Activated CD4-positive, alpha-beta memory T cell treated with anti-CD3 and anti-CD28 coated beads, Interleukin-2, amount 10 ng/mL, durations not matched to agents 7 days and 5 days (primary cell): ENCODE measurements at regions of chr14 and their contacts with region 1.

Region 1: GRCh38 chr14:49862089-49862673 is 9.6 kb upstream of the NEMF start:
- DNase-seq: peak; percentile 91
- H3K4me3 Mint-ChIP-seq: no peak overlapping the region
- H3K27ac Mint-ChIP-seq: no peak overlapping the region
- H3K4me1 Mint-ChIP-seq: peaks cover 29% of the 10 kb centered on the region
- H3K27me3 Mint-ChIP-seq: no peaks in the 10 kb centered on the region

Region 2: GRCh38 chr14:49598485-49599300 is 263.5 kb before region 1 on chr14 and contains the start of gene LRR1:
- CTCF ChIA-PET with region 1: interaction called, 7 read pairs
- POLR2A ChIA-PET with region 1: interaction called, 13 read pairs
- DNase-seq: peak; percentile 88
- H3K4me3 Mint-ChIP-seq: peak within 1 kb of the TSS; percentile 95
- H3K27ac Mint-ChIP-seq: peak within 1 kb of the TSS; percentile 95
- H3K4me1 Mint-ChIP-seq: peaks cover 47% of the 10 kb centered on the region
- H3K27me3 Mint-ChIP-seq: no peaks in the 10 kb centered on the region
- total RNA-seq, gene LRR1: 48.7 to 53.2 TPM

Region 3: GRCh38 chr14:49767562-49768300 is 94.5 kb before region 1 on chr14 and contains the start of gene KLHDC2:
- CTCF ChIA-PET with region 1: interaction called, 19 read pairs
- POLR2A ChIA-PET with region 1: interaction called, 30 read pairs
- DNase-seq: peak; percentile 92
- H3K4me3 Mint-ChIP-seq: peak within 1 kb of the TSS; percentile 98
- H3K27ac Mint-ChIP-seq: peak within 1 kb of the TSS; percentile 98
- H3K4me1 Mint-ChIP-seq: peaks cover 37% of the 10 kb centered on the region
- H3K27me3 Mint-ChIP-seq: no peaks in the 10 kb centered on the region
- total RNA-seq, gene KLHDC2: 34.3 to 34.7 TPM

Region 4: GRCh38 chr14:49908432-49908781 is 46.2 kb after region 1 on chr14:
- CTCF ChIA-PET with region 1: interaction called, 10 read pairs
- POLR2A ChIA-PET with region 1: interaction called, 8 read pairs
- DNase-seq: no peak
- H3K4me3 Mint-ChIP-seq: peak overlapping the region; percentile 21
- H3K27ac Mint-ChIP-seq: peak overlapping the region; percentile 49
- H3K4me1 Mint-ChIP-seq: peaks cover 45% of the 10 kb centered on the region
- H3K27me3 Mint-ChIP-seq: no peaks in the 10 kb centered on the region

Region 5: DNA sequence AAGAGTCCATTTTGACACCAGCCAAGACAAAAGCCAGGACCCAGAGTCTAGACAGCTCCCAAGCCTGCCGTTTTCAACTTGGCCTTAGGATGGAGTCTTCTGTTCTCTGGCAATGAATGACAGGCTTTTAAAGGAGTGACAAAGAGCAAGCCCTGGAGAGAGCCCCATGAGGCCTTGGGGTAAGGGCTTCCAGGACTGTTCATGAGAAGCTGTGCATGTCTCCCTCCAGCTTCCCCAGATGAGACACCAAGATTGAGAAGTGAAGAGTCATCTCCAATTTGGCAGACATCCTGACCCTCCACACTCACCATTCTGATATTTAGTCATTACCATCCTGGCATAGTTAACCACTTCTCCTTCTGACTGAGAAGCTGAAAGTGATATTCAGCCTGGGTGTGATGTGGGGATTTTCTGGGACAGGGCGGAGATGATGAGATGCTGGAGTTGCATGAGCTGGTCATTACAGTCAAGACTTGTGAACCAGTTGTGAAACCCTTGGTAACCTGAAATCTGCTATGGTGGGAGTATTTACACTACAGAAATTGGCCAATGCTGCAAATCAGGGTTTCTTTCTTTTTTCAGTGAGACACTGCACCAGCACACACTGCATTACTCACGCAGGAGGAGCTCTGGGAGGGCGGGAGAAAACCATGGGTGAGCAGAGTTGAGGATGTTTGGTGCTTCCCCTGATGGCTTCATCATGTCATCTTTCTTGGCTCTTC is 176.4 kb after region 1 on chr14:
- CTCF ChIA-PET with region 1: interaction called, 24 read pairs
- POLR2A ChIA-PET with region 1: interaction called, 88 read pairs
- DNase-seq: peak; percentile 70
- H3K4me3 Mint-ChIP-seq: peak overlapping the region; percentile 79
- H3K27ac Mint-ChIP-seq: peak overlapping the region; percentile 98
- H3K4me1 Mint-ChIP-seq: peaks cover 83% of the 10 kb centered on the region
- H3K27me3 Mint-ChIP-seq: no peaks in the 10 kb centered on the region

Region 6: GRCh38 chr14:50085570-50086320 is 223.6 kb after region 1 on chr14:
- CTCF ChIA-PET with region 1: interaction called, 27 read pairs
- POLR2A ChIA-PET with region 1: interaction called, 54 read pairs
- DNase-seq: no peak
- H3K4me3 Mint-ChIP-seq: peak overlapping the region; percentile 28
- H3K27ac Mint-ChIP-seq: peak overlapping the region; percentile 98
- H3K4me1 Mint-ChIP-seq: peaks cover 86% of the 10 kb centered on the region
- H3K27me3 Mint-ChIP-seq: peaks cover 4% of the 10 kb centered on the region

Region 7: DNA sequence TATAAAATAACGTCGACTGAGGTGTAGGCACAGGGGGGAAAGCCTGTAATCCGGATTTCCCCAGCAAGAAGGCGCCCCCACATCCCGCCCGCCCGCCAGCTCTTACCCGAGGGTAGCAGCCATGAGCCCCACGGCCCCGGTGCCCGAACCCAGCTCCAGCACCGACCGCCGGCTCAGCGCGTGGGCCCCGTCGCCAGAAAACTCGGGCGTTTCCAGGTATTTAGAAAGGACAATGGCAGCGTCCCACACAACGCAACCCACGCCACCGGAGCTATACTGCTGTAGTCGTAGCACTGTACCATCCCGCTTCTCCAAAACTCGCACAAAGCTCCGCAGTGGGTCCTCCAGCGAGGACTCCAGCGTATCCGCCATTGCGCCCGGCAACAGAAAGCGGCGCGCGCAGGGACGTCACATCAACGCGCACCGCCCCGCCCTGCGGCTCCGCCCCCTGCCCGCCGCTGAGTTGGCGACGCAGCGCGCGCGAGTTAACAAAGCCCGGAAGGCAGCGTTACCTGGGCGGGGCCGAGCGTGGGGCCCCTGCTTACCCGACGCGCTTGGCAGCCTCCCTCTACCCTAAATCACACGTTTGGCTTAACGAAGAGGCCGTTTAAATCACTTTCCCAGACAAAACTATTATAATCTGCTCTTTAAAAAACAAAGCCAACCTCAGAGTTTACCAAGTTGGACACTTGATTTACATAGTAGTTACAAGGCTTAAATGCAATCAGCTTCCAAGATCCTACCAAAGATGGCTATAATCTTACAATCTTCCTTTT is 254.2 kb after region 1 on chr14 and contains the start of gene VCPKMT:
- CTCF ChIA-PET with region 1: interaction called, 27 read pairs
- POLR2A ChIA-PET with region 1: interaction called, 68 read pairs
- DNase-seq: peak; percentile 97
- H3K4me3 Mint-ChIP-seq: peak within 1 kb of the TSS; percentile 99
- H3K27ac Mint-ChIP-seq: peak within 1 kb of the TSS; percentile 97
- H3K4me1 Mint-ChIP-seq: peaks cover 40% of the 10 kb centered on the region
- H3K27me3 Mint-ChIP-seq: no peaks in the 10 kb centered on the region
- total RNA-seq, gene VCPKMT: 7.5 to 9.5 TPM